ENCODE measurements at regions of chr1 and their contacts with region 1.

Region 1: DNA sequence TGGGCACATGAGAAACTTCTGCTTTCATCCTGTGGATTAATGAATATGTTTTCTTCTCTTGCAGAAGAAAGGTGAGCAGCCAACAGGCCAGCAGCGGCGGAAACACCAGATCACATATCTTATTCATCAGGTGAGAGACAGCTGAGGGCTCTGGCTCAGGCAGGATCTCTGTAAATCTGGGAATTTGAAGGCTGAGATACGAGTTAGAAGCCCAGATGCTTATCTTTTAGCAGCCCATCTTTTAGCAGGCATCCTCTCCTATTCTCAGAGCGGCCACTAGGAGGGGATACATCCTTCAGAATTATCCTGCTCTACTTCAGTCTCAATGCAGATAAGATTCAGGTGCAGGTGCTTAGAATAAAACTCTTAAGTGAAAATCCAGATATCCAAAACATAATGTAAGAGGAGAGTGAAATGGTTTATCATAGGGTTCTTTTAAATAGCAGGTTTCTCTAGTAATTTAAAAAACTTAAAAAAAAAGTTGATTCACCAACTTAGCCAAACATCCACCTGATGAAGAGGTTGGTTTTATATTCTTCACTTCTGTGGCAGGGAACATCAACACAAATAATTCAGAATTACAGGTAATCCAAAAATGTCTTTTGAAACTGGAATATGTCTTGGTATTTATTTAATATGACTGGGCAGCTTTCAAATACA is 19.3 kb downstream of the SH2D2A start:
- DNase-seq: no peak
- H3K4me3 ChIP-seq: no peak overlapping the region
- CTCF ChIP-seq: peak; percentile 73

Region 2: DNA sequence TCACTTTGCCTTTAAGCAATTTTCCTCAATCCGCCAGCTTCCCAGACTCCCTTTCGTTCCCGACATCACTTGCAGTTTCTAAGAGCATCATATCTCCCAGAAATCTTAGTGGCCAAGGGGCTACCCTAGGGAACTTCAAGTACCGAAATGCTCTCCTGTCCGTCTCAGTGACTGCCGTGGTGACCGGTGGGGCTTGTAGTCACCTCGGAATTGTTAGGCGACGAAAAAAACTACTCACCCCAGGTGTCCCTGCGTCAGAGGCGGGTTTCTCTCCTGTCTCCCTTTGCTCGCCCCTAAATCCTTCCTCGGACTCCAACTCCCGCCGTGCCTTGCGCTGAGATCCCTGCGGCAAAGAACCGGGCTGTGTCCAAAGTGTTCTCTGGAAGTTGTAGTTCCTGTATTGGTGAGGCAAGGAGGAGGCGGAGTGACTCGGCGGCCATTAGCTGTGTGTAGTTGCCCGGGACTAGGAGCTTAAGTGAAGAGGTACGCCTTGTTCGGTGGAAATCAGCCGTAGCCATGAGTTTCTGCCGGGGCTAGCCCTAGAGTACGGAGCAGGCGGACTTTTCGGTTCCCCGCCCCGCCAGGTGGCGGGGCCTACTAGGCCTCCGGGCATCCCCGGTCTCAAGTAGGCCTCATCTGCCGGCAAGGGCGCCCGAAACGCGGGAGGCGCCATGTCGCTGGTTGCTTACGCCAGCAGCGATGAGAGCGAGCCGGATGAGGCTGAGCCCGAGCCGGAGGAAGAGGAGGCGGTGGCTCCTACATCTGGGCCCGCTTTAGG is 30.1 kb before region 1 on chr1 and contains the start of gene PRCC:
- CTCF ChIA-PET with region 1: interaction called, 60 read pairs
- POLR2A ChIA-PET with region 1: interaction called, 5 read pairs
- DNase-seq: peak; percentile 99
- H3K4me3 ChIP-seq: peak within 1 kb of the TSS; percentile 95
- CTCF ChIP-seq: no peak

Region 3: DNA sequence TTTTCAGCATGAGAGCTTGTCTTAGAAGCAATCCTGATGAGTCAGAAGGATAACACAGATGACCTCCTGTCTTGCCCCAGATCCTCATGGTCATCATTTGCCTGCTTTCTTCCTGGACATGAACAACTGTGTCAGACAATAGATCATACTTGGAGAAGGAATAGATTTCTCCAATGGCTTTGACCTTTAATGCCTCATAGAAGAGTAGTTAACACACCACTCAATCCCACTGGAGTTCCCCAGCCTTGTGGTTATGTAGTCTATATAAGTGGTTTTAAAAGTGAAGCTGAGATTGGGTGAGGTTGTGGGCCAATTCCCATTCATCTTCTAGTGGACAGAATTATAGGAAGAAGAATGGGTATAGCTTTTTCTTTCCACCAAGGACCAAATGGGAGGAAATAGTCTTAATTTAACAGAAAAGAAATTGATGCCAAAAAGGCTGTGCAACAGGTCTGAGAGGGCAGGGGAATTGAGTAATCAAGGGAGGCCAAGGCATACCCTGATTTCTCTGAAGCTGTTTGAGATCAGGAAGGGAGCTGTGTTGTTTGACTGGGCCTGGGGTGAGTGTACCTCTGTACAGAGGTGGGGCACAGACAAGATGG is 15.7 kb before region 1 on chr1:
- CTCF ChIA-PET with region 1: interaction called, 24 read pairs
- POLR2A ChIA-PET with region 1: no interaction called
- DNase-seq: no peak
- H3K4me3 ChIP-seq: no peak overlapping the region
- CTCF ChIP-seq: no peak

Region 4: GRCh38 chr1:156852418-156852874 is 55.1 kb after region 1 on chr1:
- CTCF ChIA-PET with region 1: interaction called, 476 read pairs
- POLR2A ChIA-PET with region 1: interaction called, 4 read pairs
- DNase-seq: no peak
- H3K4me3 ChIP-seq: no peak overlapping the region
- CTCF ChIP-seq: no peak

Region 5: DNA sequence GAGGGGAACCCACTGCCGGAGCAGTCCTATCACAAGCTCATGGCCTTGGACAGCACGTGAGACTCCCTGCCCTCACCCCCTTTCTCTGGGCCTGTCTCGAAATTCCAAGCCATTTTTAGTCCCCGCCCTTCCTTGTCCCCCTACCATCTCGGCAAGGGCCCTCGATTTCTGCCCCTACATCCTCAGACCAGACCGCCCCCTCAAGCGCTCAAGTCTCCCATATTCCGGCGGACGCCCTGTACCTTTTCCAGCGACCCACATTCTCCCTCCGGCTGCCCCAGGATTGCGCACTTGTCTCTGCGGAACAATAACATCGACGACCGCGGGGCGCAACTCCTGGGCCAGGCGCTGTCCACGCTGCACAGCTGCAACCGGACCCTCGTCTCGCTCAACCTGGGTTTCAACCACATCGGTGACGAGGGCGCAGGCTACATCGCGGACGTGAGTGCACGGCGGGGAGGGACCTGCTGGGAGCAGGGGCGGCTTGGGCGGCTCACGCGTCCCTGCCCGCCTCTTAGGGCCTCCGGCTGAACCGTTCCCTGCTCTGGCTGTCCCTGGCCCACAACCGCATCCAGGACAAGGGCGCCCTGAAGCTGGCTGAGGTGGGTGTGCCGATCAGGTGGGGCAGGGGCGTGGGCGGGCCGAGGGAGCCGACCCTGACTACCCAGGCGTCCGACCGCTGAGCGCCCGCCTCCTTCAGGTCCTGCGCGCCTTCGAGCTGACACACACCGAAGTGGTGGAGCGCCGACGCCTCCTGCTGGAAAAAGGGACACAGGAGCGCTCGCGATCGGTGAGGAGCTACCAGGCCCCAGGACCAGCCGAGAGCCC is 130.1 kb after region 1 on chr1:
- CTCF ChIA-PET with region 1: interaction called, 150 read pairs
- POLR2A ChIA-PET with region 1: interaction called, 3 read pairs
- DNase-seq: no peak
- H3K4me3 ChIP-seq: peak overlapping the region; percentile 55
- CTCF ChIP-seq: peak; percentile 94

Region 6: GRCh38 chr1:157279138-157279801 is 481.9 kb after region 1 on chr1:
- CTCF ChIA-PET with region 1: no interaction called
- POLR2A ChIA-PET with region 1: no interaction called
- DNase-seq: no peak
- H3K4me3 ChIP-seq: no peak overlapping the region
- CTCF ChIP-seq: no peak

Measured in AG04449 (cell line).